ENCODE measurements at regions of chr3 and their contacts with region 1.

Region 1: DNA sequence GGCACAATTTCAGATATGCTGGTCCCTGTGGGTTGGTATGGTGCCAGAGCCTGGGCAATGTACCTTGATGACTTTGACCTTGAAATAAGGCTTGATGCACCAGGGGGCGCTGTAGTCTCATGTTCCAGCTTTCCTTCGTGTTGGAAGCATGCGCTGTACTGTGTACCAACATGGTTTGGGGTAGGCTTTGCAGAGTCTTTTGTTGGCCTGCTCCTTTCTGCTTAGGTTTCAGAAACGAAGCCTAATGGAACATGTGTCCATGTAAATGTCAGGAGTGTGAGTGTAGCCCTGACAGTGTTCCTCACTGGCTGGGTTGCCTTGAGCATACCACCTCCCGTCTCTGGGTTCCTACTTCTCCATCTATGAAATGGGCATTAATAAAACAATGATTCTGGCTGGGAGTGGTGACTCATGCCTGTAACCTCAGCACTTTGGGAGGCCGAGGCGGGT is 3.6 kb upstream of the CCR4 start:
- DNase-seq: peak; percentile 83
- H3K4me3 Mint-ChIP-seq: no peak overlapping the region
- H3K27ac Mint-ChIP-seq: peak overlapping the region; percentile 44
- H3K4me1 Mint-ChIP-seq: peaks cover 48% of the 10 kb centered on the region
- H3K27me3 Mint-ChIP-seq: peaks cover 2% of the 10 kb centered on the region

Region 2: DNA sequence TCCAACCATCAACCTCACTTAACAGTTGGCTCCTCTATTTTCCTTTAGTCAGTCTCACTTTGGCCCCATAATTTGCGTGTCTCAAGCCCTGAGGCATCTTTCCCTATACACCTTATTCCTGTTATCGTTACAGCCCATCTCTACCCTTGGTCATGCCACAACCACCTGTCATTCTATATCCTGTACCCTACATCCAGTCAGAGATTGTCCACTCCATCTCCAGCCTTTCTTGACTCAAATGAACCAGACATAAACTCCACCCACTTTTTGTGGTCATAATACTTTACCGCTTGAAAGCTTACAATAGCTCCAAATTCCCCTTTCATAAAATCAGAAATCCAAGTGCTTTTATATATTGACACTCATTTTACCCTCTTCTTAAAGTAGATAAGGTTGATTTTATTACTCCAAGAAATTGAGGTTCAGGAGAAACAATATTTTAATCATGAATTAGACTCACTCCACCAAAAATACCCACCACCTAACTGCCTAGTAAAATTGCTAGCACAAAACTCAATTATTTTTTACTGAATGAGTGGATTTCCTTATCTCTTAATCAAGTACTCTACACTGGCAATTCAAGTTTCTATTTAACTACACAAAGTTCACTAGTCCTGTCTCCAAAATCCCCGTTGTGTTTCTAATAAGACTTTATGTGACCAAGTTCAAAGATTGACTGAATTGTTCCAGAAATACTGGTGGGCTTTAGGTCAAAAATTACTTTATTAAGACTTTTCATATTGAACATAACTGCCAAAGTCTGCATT is 12.8 kb after region 1 on chr3:
- intact Hi-C with region 1: loop called (anchors 1 kb)
- DNase-seq: no peak
- H3K4me3 Mint-ChIP-seq: peak overlapping the region; percentile 34
- H3K27ac Mint-ChIP-seq: peak overlapping the region; percentile 97
- H3K4me1 Mint-ChIP-seq: peaks cover 56% of the 10 kb centered on the region
- H3K27me3 Mint-ChIP-seq: no peaks in the 10 kb centered on the region

Region 3: GRCh38 chr3:33030802-33031201 is 83.0 kb after region 1 on chr3:
- intact Hi-C with region 1: loop called (anchors 1 kb)
- DNase-seq: peak; percentile 50
- H3K4me3 Mint-ChIP-seq: peak overlapping the region; percentile 12
- H3K27ac Mint-ChIP-seq: peak overlapping the region; percentile 49
- H3K4me1 Mint-ChIP-seq: peaks cover 32% of the 10 kb centered on the region
- H3K27me3 Mint-ChIP-seq: no peaks in the 10 kb centered on the region

Region 4: GRCh38 chr3:33074217-33075067 is 126.6 kb after region 1 on chr3:
- intact Hi-C with region 1: loop called (anchors 1 kb)
- DNase-seq: peak; percentile 43
- H3K4me3 Mint-ChIP-seq: no peak overlapping the region
- H3K27ac Mint-ChIP-seq: no peak overlapping the region
- H3K4me1 Mint-ChIP-seq: peaks cover 42% of the 10 kb centered on the region
- H3K27me3 Mint-ChIP-seq: no peaks in the 10 kb centered on the region

Region 5: DNA sequence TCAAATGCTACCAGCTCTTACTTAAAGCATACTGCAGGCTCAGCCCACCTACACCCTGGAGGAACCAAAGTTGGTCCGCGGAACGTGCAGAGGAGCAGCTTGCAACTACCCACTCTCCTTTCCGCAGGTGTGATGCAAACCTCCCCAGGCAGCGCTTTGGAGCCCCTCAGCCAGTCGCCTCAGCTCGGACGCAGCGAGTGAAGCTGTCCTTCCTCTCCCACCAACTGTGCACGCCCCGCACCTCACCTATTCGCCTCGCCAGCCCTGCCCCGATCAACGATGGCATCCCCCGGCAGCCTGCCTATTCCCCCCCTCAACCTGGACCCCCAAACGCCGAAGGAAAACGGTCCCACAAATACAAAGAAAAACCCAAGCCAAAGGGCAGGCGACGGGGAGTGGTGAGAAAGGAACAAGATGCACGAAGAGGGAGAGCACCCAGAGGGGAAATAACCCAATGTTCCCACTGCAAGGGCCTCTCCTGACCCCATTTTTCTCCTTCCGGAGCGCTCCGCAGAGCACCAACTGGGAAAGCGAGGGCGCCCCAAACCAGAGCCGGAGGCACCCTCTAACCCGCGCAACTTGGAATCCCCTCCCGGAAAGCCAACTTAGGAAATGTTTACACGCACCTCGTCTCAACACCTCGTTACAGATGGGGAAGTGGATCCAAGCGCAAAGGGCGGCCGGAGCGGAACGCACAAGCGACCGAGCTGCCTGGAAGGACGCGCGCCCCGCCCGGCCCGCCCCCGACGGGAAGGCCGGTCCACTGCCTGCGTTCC is 148.5 kb after region 1 on chr3:
- intact Hi-C with region 1: loop called (anchors 1 kb)
- DNase-seq: peak; percentile 39
- H3K4me3 Mint-ChIP-seq: peak overlapping the region; percentile 97
- H3K27ac Mint-ChIP-seq: peak overlapping the region; percentile 86
- H3K4me1 Mint-ChIP-seq: peaks cover 43% of the 10 kb centered on the region
- H3K27me3 Mint-ChIP-seq: peaks cover 2% of the 10 kb centered on the region

Region 6: GRCh38 chr3:33250712-33251111 is 302.9 kb after region 1 on chr3:
- intact Hi-C with region 1: loop called (anchors 5 kb)
- DNase-seq: no peak
- H3K4me3 Mint-ChIP-seq: no peak overlapping the region
- H3K27ac Mint-ChIP-seq: no peak overlapping the region
- H3K4me1 Mint-ChIP-seq: no peaks in the 10 kb centered on the region
- H3K27me3 Mint-ChIP-seq: peaks cover 7% of the 10 kb centered on the region

Region 7: GRCh38 chr3:33372218-33373081 is 424.6 kb after region 1 on chr3:
- intact Hi-C with region 1: loop called (anchors 1 kb)
- DNase-seq: peak; percentile 12
- H3K4me3 Mint-ChIP-seq: no peak overlapping the region
- H3K27ac Mint-ChIP-seq: no peak overlapping the region
- H3K4me1 Mint-ChIP-seq: peaks cover 8% of the 10 kb centered on the region
- H3K27me3 Mint-ChIP-seq: peaks cover 5% of the 10 kb centered on the region

Region 8: GRCh38 chr3:34260271-34261006 is 1312.6 kb after region 1 on chr3:
- intact Hi-C with region 1: no loop called
- DNase-seq: no peak
- H3K4me3 Mint-ChIP-seq: no peak overlapping the region
- H3K27ac Mint-ChIP-seq: no peak overlapping the region
- H3K4me1 Mint-ChIP-seq: no peaks in the 10 kb centered on the region
- H3K27me3 Mint-ChIP-seq: no peaks in the 10 kb centered on the region